Vagina (tissue), 2 donors: ENCODE measurements at regions of chr7 and their contacts with region 1.

Region 1: DNA sequence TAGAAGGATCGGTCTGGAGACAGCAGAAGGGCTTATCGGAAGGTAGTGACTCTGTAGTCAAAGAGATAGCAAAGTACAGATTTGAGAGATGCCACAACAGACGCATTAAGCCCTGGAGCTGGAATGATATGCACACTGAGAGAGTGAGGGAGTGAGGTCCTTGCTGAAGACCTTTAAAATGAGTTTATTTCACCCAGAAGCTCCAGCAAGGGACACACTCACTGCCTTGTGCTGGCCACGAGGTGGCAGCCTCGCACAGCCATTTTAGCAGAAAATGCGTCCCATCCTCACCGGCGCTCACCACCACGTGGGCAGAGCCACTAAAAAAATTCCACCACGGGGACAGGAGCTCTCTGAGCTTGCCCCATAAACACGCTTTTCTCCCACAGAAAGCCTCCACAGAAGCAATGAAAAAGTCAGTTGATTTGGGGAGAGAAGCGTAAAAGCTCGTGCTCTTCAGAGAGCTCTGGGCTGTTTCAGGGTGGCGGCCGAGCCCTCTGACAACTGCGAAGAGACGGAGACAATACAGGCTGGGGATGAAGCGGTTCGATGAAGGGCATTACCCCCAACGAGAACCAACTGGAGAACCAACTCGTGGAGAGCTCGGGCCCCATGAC is 163.0 kb upstream of the KLF14 start:
- DNase-seq: no peak
- H3K4me3 ChIP-seq: no peak overlapping the region
- H3K27ac ChIP-seq: peak overlapping the region; percentile 86
- H3K4me1 ChIP-seq: peaks cover 93% of the 10 kb centered on the region
- H3K27me3 ChIP-seq: no peaks in the 10 kb centered on the region
- CTCF ChIP-seq: peak; percentile 54 to 82 (median 78)
- POLR2A ChIP-seq: no peak

Region 2: DNA sequence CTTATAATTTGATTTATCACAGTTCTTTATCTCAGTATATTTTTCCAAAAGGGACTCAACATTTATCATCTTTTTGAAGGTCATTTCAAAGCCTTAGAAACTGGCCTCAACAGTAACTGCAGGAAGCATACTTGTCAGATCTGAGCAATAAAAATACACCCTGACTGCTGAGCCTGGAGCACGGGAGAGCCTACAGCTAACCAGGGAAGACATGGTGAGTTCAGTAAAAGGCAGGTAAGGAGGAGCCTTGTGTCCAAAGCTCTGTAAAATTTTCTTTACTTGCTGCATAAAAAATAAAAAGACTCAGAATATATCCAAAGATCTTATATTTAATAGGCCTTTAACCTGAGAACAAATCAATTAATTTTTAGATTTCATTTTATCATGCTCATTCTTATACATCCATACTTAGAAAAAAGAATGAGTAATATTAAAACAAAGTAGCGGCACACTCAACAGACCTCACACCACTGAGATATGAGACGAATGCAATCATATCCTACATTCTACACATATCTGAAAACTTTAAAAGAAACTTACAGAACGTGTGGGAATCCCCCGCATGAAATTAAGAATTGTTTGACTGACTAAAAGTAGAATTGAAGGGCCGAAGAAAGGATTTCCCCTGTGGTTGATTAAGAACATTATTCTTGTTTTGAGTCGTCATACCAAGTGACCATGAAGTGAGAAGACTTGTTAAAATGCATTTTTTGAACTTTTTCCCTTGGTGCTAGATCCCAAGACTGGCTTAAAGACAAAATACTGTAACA is 134.3 kb after region 1 on chr7:
- intact Hi-C with region 1: loop called (anchors 10 kb)
- DNase-seq: no peak
- H3K4me3 ChIP-seq: no peak overlapping the region
- H3K27ac ChIP-seq: no peak overlapping the region
- H3K4me1 ChIP-seq: peaks cover 84% of the 10 kb centered on the region
- H3K27me3 ChIP-seq: no peaks in the 10 kb centered on the region
- CTCF ChIP-seq: no peak
- POLR2A ChIP-seq: no peak